ENCODE measurements at regions of chr12 and their contacts with region 1.

Region 1: DNA sequence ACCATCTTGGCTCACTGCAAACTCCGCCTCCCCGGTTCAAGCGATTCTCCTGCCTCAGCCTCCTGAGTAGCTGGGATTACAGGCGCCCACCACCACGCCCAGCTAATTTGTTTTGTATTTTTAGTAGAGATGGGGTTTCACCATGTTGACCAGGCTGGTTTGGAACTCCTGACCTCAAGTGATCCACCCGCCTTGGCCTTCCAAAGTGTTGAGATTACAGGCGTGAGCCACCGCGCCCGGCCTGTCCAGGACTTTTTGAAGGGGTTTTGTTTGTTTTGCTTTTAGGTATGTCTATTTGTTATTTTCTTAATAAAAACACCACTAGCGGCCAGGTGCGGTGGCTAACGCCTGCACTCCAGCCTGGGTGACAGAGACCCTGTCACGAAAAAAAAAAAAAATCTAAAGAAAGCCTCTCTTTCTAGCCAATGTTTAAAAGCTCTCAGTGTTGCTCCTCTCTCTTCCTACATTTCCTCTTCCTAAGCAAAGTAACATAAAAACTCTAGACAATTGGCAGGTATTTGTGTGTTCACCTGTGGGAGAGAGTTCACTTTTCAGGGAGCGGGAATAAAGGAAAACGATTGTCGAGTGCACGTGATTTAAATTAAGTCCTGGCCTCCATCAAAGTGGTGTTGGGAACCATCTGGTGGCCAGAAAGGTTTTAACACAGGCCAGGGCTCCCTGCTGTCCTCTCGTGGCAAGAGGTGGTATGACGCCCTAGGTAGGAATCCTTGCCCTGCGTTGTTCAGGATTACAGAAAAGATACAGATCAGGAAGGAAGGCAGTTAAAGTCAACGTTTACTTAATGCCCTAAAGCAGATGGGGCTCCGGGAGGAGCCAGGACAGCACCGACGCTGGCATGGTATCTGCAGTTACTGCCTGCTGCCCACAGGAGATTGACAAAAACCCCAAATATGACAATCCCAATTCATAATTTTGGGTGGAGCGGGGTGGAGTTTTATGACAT is 36.2 kb upstream of the ATP23 start:
- DNase-seq: peak; percentile 73
- H3K4me3 ChIP-seq: no peak overlapping the region
- H3K27ac ChIP-seq: no peak overlapping the region
- H3K27me3 ChIP-seq: peaks cover 19% of the 10 kb centered on the region
- CTCF ChIP-seq: peak; percentile 100

Region 2: DNA sequence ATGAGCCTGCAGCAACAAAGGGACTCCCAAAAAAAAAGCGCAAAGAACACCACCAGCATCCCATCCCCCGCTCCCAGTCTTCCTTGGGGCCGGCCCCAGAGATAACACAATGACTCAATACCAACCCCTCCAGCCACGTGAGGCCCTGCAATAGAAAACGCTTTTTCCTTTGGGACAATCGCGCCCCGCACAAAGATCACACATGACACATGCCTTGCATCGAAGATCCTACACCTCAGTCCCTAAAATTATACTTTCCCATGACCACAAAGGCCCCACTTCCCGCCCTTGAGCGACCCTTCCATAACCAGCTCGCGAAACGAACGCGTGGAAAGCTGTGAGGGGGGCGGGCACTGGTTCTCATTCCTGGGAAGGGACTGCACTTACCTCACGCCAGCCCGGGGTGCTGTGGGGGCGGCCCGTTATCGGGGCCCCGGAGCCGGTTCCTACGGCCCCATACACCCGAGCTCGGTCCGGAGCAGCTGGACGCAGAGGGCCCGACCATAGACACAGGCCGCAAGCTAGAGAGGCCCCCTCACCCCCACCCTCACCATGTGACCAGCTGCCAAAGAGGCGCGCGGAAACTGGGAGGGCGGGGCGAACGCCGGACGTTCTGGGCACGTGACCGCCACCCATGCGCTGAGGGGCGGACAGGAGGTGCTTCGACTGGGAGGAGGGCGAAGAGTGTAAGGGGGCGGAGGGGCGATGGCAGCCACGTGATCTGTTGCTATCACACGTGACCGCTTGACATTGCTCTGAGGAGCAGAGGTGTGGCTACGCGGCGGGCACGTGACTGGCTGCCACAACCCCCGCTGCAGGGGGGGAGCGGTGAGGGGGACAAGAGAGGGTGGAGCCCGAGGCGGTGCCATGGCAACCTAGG is 153.1 kb before region 1 on chr12 and contains the start of gene CDK4:
- CTCF ChIA-PET with region 1: interaction called, 12 read pairs
- POLR2A ChIA-PET with region 1: no interaction called
- DNase-seq: peak; percentile 100
- H3K4me3 ChIP-seq: peak within 1 kb of the TSS; percentile 91
- H3K27ac ChIP-seq: peak within 1 kb of the TSS; percentile 91
- H3K27me3 ChIP-seq: peaks cover 15% of the 10 kb centered on the region
- CTCF ChIP-seq: no peak
- polyA plus RNA-seq, gene CDK4: 251 and 288 TPM in 2 replicates

Region 3: DNA sequence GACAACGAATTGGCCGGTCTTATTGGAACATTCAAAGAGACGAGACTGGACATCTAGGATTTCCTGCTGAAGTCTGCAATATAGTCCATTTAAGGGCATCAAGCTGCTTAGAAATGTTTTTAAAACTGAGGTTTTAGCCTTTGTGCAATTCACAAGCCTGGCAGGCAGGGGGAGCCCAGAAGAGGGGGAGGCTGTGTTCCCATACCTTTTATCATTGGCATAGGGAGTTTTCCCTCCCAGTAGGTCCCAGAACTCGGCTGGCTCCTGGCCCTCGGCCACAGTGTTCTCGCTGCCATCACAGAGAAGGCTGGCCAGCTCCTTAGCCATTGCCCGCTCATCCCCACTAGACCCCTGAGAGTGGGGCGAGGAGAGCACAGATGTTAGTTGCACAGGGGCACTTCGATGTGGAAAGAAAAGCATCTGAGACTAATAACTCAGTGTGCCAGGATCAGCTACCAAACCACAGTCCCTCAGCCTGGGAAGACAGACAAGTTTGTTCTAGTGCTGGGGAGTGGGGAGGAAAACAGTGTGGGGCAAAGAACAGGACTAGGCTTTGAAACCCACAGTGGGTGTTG is 101.7 kb before region 1 on chr12:
- CTCF ChIA-PET with region 1: interaction called, 124 read pairs
- POLR2A ChIA-PET with region 1: no interaction called
- DNase-seq: no peak
- H3K4me3 ChIP-seq: no peak overlapping the region
- H3K27ac ChIP-seq: no peak overlapping the region
- H3K27me3 ChIP-seq: no peaks in the 10 kb centered on the region
- CTCF ChIP-seq: peak; percentile 86

Region 4: DNA sequence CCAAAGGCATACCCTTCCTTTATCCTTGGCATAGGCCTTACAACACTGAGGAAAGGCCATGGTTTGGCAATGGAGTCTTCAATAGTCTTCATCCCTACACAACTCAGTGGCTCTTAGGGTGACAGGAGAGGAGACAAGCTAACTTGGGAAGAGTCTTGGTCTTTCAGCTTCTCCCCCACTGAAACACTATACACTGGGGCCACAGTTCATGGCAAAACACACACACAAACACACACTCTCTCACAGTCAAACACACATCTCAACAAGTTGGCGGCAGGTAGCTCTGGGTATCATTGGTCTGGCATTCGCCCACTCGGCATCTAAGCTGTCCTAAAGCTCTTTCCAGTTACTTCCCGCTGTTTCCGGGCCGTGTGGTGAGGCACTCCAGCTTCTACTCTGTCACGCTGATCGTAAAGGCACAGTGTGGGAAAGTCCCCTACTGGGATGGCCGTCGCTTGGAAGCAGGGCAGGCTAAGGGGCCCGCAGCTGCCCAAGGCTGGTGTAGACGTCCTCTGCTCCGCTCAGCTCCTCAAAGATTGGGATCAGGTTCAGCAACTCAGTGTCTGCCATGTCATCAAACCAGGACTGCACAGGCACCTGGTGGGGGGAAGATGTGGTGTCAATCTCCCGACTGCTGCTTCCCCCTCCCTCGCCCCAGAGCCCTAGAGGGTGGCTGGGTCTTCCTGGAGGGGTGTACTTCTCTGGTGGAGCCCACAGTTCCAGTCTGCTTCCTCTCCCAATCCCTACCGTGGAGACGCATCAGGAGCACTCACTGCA is 81.8 kb before region 1 on chr12:
- CTCF ChIA-PET with region 1: interaction called, 63 read pairs
- POLR2A ChIA-PET with region 1: no interaction called
- DNase-seq: no peak
- H3K4me3 ChIP-seq: no peak overlapping the region
- H3K27ac ChIP-seq: no peak overlapping the region
- H3K27me3 ChIP-seq: no peaks in the 10 kb centered on the region
- CTCF ChIP-seq: no peak

Region 5: DNA sequence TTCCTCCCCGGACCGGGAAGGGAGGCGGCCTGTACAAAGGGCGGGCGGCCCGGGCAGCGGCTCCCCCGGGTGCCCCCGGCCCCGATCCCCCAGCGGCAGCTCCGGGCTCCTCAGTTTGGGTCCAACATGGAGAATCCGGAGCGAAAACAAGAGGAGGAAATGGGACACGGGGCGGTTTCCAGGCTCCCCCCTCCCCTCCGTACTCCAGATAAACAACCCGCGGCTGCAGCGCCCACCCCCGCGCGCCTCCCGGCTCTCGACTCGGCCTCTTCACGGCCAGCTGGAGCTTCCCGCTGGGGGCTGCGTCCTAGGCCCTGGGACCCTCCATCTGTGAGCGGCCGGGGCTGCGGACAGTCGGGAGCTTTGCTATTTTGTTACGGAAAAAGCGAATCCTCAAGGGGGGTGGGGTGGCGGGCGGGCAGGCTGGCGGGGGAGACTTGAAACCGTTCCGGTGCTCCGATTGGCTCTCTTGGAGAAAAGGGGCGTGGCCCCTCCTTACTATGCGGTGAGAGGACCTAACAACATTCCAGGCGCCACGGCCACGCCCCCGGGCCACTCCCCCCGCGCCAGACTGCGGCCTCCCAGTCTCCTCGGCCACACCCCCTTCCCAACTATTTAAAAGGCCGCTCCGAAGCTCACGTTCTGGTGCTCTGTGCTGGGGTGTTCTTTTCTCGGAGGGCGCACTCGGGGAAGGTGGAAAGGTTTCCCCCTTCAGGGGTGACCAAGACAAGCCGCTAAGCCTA is 58.4 kb before region 1 on chr12 and contains the start of gene CTDSP2:
- CTCF ChIA-PET with region 1: interaction called, 44 read pairs
- POLR2A ChIA-PET with region 1: interaction called, 6 read pairs
- DNase-seq: peak; percentile 96
- H3K4me3 ChIP-seq: peak within 1 kb of the TSS; percentile 97
- H3K27ac ChIP-seq: peak within 1 kb of the TSS; percentile 98
- H3K27me3 ChIP-seq: no peaks in the 10 kb centered on the region
- CTCF ChIP-seq: no peak
- polyA plus RNA-seq, gene CTDSP2: 292 and 305 TPM in 2 replicates

Region 6: GRCh38 chr12:58030566-58031279 is 125.6 kb after region 1 on chr12:
- CTCF ChIA-PET with region 1: no interaction called
- POLR2A ChIA-PET with region 1: no interaction called
- DNase-seq: no peak
- H3K4me3 ChIP-seq: no peak overlapping the region
- H3K27ac ChIP-seq: no peak overlapping the region
- H3K27me3 ChIP-seq: no peaks in the 10 kb centered on the region
- CTCF ChIP-seq: no peak

Region 7: DNA sequence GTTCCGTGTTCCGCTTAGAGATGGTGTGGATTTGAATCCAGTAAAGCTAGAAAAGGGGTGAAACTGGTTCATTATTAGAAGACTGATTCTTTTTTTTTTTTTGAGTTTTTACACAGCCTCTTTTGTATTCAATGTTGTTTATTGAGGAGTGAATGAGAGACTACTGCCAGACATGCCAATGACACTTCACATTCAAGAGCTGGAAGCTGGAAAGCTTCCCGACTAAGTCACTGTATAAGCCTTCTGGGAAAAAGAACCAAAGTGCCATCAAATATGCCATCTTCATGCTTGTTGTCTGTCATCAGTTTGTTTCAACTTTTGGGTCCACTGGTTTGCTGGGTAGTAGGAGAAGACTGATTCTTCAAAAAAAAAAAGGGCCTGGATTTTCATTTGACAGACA is 201.1 kb after region 1 on chr12:
- CTCF ChIA-PET with region 1: no interaction called
- POLR2A ChIA-PET with region 1: no interaction called
- DNase-seq: no peak
- H3K4me3 ChIP-seq: no peak overlapping the region
- H3K27ac ChIP-seq: no peak overlapping the region
- H3K27me3 ChIP-seq: no peaks in the 10 kb centered on the region
- CTCF ChIP-seq: no peak

Measured in AG04450 (cell line).